ENCODE measurements at regions of chr1 and their contacts with region 1.

Region 1: DNA sequence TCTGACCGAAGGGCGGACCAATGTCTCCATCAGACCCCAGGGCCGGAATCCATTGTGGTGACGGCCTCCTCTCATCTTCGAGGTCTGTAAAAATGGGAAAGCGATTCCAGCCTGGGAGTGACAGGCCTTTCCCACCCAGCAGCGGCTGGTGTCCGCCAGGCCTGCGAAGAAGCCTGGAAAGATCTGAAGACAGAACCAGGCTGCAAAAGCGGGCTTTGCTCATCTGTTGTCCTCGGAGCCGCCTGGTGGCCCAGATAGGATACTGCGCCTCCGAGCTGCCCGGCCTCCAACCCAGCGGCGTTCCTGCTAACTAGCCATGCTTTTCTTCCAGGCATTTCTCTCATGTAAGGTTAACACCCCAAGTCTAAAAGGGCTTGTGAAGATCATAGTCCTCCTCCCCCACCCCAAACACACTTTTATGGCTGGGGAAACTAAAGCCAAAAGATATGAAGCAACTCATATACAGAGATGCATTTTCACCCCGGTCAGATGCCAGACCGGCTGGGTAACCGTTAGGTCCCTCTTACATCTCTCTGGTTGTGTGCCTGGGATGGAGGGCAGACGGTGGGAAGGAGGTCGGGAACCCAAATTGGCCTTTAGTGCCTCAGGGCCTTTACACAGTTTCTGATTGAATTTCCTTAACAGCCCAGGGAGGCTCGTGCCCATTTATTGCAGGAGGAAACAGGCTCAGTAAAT is 1.9 kb upstream of the DHRS3 start:
- DNase-seq: peak; percentile 88 to 92 (median 92)
- ATAC-seq: peak; percentile 66
- H3K4me3 ChIP-seq: no peak overlapping the region
- H3K4me1 ChIP-seq: peaks cover 11% of the 10 kb centered on the region
- CTCF ChIP-seq: peak; percentile 92

Region 2: DNA sequence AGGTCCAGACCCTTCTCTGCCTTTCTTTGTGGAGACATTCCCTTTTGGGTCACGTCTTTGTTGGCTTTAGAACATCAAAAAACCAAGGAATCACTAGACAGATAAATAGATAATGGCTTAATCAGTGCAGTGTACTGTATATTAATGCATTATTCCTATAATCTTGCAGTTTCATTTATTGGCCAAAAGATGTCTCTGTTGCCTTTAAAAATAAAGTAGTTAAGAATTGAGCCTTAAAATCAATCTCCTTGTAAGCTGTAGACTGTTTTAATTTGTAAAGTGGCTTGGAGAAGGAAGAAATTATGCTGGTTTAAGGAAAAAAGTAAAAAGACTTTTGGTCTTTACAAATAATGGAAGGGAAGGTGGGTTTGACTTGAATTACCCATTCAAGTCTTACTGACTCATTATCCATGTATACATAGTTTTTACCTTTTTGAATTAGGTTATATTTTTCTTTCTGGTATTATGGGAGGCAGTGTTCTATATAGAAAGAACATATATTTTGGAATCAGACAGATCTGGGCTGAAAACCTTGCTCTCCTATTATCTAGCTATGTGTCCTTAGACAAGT is 305.5 kb before region 1 on chr1:
- intact Hi-C with region 1: loop called in 1 of 2 experiments (anchors 10 kb)
- DNase-seq: no peak
- ATAC-seq: no peak
- H3K4me3 ChIP-seq: no peak overlapping the region
- H3K4me1 ChIP-seq: no peaks in the 10 kb centered on the region
- CTCF ChIP-seq: no peak

Region 3: DNA sequence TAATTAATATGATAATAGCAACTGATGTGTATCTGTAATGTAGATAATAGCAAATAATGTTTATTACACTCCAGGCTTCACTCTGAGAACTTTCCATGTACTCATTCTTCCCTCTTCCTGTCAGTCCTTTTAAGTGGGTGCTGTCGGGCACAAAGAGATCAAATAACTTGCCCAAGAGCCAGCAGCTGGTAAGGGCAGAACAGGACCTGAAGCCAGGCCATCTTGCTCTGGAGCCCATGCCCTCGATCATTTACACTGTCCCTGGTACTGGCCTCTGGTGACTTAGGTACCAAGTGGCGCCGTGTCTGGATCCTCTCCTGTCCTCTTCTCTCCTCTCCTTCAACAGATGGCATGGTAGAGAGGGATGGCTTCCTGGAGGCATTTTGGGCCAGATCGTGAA is 293.0 kb before region 1 on chr1:
- intact Hi-C with region 1: loop called in 1 of 2 experiments (anchors 10 kb)
- DNase-seq: no peak
- ATAC-seq: no peak
- H3K4me3 ChIP-seq: no peak overlapping the region
- H3K4me1 ChIP-seq: no peaks in the 10 kb centered on the region
- CTCF ChIP-seq: no peak

Region 4: GRCh38 chr1:12397462-12398450 is 222.2 kb before region 1 on chr1:
- intact Hi-C with region 1: no loop called
- DNase-seq: no peak
- ATAC-seq: peak; percentile 68
- H3K4me3 ChIP-seq: no peak overlapping the region
- H3K4me1 ChIP-seq: no peaks in the 10 kb centered on the region
- CTCF ChIP-seq: no peak

Region 5: DNA sequence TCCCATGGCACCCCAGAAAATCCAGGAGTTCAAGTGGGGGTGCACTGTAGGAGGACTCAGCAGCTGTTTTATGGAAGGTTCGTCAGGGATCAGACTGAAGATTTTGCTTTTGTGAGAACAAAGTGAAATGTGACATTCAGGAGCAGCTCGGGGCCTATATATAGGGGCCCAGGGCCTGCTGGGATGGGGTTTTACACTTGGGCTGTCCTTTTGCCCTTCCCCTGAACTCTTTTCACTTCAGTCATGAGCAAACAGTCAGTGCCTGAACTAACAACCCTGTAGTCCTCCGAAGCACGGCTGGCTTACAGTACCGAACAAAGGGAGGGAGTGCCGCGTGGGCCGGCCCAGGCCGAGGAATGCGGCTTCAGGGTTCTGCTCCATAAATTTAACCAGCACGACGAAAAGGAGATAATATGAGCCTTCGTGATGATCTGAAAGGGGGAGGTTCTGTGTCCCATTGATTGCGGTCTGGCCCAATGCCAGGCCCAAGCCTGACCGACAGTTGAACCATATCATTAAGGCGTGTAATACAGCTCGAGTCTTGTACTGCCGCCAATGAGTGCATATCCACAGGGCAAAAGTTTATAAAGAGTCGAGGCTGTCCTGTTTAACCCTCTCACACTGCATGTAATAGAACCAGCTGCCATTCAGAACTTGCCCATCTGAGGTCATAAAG is 141.9 kb before region 1 on chr1:
- intact Hi-C with region 1: loop called in 1 of 2 experiments (anchors 10 kb)
- DNase-seq: peak; percentile 92 to 94 (median 93)
- ATAC-seq: peak; percentile 77
- H3K4me3 ChIP-seq: peak overlapping the region; percentile 3
- H3K4me1 ChIP-seq: peaks cover 67% of the 10 kb centered on the region
- CTCF ChIP-seq: no peak